Cardiac septum (tissue), 1 donor: ENCODE measurements at regions of chr2 and their contacts with region 1.

Region 1: GRCh38 chr2:26846328-26847306 is 1.3 kb upstream of the DPYSL5 start:
- DNase-seq: no peak

Region 2: GRCh38 chr2:26922405-26923188 is 76.0 kb after region 1 on chr2:
- intact Hi-C with region 1: loop called (anchors 5 kb)
- DNase-seq: peak; percentile 75

Region 3: GRCh38 chr2:26942543-26943295 is 96.1 kb after region 1 on chr2:
- intact Hi-C with region 1: loop called (anchors 2 kb)
- DNase-seq: no peak

Region 4: DNA sequence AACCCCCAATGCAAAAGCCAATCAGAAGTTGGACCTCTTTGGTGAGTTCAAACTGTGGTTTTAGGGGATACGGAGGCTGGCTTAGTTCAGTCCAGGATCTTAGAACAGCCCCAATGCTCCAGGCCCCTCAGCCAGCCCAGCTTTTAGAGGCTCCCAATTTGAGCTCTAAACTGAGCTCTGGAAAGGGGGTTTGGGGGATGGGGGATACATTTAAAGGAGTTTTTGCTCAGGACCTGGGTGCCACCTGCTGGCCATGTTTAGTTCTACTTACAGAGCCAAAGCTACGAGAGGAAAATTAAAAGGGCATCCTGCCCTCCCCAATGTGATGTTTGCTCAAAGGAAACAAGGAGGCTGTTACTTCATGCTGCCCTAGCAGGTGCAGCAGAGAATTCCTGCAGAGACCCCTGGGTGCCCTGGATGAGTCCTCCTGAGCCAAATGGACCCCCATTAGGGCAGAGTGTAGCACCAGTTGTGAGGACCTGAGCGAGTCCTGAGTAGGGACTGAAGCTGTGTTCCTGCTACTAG is 170.2 kb after region 1 on chr2:
- intact Hi-C with region 1: loop called (anchors 5 kb)
- DNase-seq: peak; percentile 14